ENCODE measurements at regions of chr2 and their contacts with region 1.

Region 1: GRCh38 chr2:101205521-101205998 is 47.1 kb upstream of the CNOT11 start:
- DNase-seq: no peak

Region 2: DNA sequence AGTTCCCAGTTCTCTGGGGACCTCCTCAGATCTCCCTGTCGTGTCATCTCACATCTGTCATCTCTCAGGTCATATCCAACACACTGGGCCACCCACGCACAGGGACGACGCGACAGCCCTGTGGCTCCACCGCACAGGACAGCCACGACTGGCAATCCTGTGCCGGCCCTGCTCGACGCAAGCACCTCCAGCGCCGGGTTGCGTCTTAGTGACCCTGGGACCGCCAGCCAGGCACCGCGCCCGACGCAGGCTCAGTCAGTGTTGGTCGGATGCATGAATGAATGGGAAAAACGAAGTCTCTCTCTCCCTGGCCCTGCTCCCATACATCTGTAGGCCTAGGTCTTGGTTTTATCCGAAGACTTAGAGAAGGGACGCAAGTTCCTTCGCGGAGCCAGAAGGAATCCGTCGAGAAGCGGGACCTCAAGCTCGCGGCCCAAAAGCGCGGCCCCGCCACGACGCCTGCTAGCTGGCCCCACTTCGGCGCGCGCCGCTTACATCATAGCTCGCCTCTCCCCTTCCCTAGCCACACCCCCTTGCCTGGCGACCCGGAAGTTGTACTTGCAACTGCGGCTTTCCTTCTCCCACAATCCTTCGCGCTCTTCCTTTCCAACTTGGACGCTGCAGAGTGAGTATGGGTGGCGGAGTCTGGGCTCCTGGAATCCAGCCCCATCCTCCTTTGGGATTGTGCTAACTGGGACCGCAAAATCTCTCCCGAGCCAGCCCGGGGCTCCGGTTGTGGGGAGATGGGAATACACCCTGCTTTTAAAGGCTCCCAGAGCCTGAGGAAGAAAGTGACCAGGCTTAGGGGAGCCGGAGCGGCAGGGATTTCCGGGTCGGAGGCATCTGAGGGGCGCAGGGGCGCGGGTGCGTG is 203.6 kb before region 1 on chr2 and contains the start of gene RPL31:
- intact Hi-C with region 1: no loop called
- DNase-seq: peak; percentile 98
- total RNA-seq, gene RPL31: 649 TPM

Region 3: GRCh38 chr2:101012706-101013181 is 192.8 kb before region 1 on chr2:
- intact Hi-C with region 1: loop called (anchors 5 kb)
- DNase-seq: no peak

Region 4: GRCh38 chr2:101036562-101037457 is 168.8 kb before region 1 on chr2:
- intact Hi-C with region 1: loop called (anchors 5 kb)
- DNase-seq: no peak

Region 5: DNA sequence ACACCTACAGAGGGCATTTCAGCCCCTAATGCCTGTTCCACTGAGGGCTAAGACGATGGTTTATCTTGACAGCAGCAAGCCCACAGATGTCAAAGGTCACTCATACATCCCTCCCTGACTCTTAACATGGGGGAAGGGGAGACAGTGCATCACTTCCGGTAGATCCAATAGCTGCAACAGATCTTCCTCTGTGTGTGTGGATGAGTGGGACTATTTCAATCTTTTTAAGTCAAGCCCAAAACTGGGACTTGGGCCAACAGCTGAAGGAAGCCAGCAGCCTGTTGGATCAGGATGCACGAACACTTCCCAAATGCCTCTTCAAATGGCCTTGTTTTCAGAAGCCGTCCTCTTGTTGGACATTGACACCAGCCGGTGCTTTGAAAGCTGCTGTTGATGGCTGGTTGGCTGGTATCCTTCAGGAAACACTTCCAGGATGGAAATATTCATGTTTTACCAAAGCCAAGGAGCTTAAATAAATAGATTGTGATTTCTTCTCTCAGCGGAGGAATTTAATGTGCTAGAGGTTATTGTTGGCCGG is 845.4 kb after region 1 on chr2:
- intact Hi-C with region 1: no loop called
- DNase-seq: peak; percentile 92